PC-9 (cell line): ENCODE measurements at regions of chr6 and their contacts with region 1.

Region 1: GRCh38 chr6:27726620-27727023 is 185.6 kb downstream of the OR2B2 start:
- DNase-seq: peak in 1 of 2 experiments; percentile 44
- H3K4me3 ChIP-seq: no peak overlapping the region
- H3K27ac ChIP-seq: no peak overlapping the region
- H3K4me1 ChIP-seq: peaks cover 7% of the 10 kb centered on the region; the same call in 1 of the 2 replicates
- H3K27me3 ChIP-seq: no peaks in the 10 kb centered on the region; the same call in 1 of the 2 replicates
- CTCF ChIP-seq: no peak

Region 2: DNA sequence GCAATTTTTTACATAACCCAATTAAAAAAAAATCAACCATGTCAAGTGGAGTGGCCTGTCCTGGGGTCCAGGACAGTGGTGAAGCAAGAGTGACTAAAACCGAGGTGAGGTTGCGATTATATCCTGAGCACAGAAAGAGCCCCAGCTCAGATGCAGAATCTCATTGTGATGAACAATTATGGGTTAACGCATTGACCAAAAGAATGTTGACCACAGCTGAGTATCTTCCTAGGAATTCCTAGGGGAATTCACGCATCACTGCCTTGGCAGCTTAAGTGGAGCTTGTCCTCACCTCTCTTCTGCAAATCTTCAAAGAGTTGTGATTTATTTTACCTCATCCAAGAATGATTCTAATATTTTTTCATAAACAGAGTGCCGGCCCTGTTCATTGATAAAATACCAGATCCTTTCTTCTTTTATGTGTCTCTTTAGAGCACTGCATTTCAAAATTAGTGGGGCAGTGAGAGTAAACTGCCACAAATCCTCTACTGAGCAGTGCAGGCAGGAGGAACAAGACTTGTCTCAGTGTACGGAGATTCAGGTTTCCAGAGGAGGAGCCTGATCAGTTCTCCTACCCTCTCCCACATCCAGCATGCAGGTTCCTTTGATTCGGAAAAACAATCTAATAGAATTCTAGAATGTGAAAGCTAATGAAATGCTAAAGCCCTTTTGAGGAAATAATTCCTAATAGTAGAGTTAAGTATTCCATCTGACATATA is 193.6 kb before region 1 on chr6:
- CTCF ChIA-PET with region 1: no interaction called
- POLR2A ChIA-PET with region 1: interaction called, 19 read pairs
- intact Hi-C with region 1: no loop called
- DNase-seq: peak; percentile 51 to 76
- H3K4me3 ChIP-seq: peak overlapping the region; percentile 13; the same call in 1 of the 2 replicates
- H3K27ac ChIP-seq: no peak overlapping the region
- H3K4me1 ChIP-seq: peaks cover 18% of the 10 kb centered on the region
- H3K27me3 ChIP-seq: no peaks in the 10 kb centered on the region
- CTCF ChIP-seq: no peak

Region 3: GRCh38 chr6:27562027-27562410 is 164.6 kb before region 1 on chr6:
- CTCF ChIA-PET with region 1: no interaction called
- POLR2A ChIA-PET with region 1: no interaction called
- intact Hi-C with region 1: no loop called
- DNase-seq: no peak
- H3K4me3 ChIP-seq: peak overlapping the region; percentile 52
- H3K27ac ChIP-seq: no peak overlapping the region
- H3K4me1 ChIP-seq: peaks cover 2% of the 10 kb centered on the region
- H3K27me3 ChIP-seq: no peaks in the 10 kb centered on the region
- CTCF ChIP-seq: no peak

Region 4: GRCh38 chr6:27672113-27672799 is 54.4 kb before region 1 on chr6:
- CTCF ChIA-PET with region 1: no interaction called
- POLR2A ChIA-PET with region 1: no interaction called
- intact Hi-C with region 1: no loop called
- DNase-seq: peak; percentile 83
- H3K4me3 ChIP-seq: peak overlapping the region; percentile 85
- H3K27ac ChIP-seq: peak overlapping the region; percentile 58
- H3K4me1 ChIP-seq: peaks cover 32% of the 10 kb centered on the region
- H3K27me3 ChIP-seq: no peaks in the 10 kb centered on the region
- CTCF ChIP-seq: no peak